Mammary epithelial cell (primary cell): ENCODE measurements at regions of chr22 and their contacts with region 1.

Region 1: GRCh38 chr22:40525249-40525884 is 111.2 kb downstream of the MRTFA start:
- DNase-seq: peak; percentile 20
- H3K4me3 ChIP-seq: no peak overlapping the region
- H3K27ac ChIP-seq: no peak overlapping the region
- H3K4me1 ChIP-seq: peaks cover 5% of the 10 kb centered on the region
- H3K27me3 ChIP-seq: no peaks in the 10 kb centered on the region
- CTCF ChIP-seq: peak; percentile 63 to 70

Region 2: DNA sequence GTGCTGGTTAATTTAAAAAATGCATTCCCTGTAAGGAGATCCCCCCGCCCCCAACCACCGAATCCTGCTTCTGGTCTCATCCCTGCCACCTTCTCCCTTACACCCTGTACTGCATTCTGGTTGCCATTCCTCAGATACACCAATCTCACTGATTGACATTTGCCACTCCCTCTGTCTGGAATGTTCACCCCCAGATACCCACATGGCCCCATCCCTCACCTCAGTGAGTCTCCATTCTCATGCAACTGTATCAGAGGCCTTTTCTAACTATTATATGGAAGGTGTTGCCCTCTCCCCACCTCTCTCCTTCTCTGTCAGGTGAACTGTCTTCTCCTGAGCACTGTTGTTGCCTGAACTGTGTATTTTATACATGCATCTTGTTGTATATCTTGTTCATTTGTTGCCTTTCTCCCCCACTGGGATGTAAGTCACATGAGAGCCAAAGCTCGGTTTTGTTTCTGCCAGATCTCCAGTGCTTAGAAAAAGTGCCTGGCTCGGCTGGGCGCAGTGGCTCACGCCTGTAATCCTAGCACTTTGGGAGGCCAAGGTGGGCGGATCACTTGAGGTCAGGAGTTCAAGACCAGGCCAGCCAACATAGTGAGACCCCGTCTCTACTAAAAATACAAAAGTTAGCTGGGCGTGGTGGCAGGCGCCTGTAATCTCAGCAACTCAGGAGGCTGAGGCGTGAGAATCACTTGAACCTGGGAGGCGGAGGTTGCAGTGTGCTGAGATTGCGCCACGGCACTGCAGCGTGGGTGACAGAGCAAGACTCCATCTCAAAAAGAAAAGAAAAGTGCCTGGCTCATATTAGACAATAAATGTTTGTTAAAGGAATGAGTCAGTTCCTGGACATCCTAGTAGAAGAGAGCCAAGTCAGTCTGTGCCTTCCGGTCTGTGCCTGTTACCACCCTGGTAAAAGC is 286.7 kb before region 1 on chr22:
- CTCF ChIA-PET with region 1: no interaction called
- dilution Hi-C with region 1: no loop called
- in situ Hi-C with region 1: no loop called
- intact Hi-C with region 1: no loop called
- DNase-seq: peak; percentile 87
- H3K4me3 ChIP-seq: peak overlapping the region in 1 of 3 experiments; percentile 22
- H3K27ac ChIP-seq: peak overlapping the region; percentile 70
- H3K4me1 ChIP-seq: peaks cover 63% of the 10 kb centered on the region
- H3K27me3 ChIP-seq: no peaks in the 10 kb centered on the region
- CTCF ChIP-seq: no peak

Region 3: DNA sequence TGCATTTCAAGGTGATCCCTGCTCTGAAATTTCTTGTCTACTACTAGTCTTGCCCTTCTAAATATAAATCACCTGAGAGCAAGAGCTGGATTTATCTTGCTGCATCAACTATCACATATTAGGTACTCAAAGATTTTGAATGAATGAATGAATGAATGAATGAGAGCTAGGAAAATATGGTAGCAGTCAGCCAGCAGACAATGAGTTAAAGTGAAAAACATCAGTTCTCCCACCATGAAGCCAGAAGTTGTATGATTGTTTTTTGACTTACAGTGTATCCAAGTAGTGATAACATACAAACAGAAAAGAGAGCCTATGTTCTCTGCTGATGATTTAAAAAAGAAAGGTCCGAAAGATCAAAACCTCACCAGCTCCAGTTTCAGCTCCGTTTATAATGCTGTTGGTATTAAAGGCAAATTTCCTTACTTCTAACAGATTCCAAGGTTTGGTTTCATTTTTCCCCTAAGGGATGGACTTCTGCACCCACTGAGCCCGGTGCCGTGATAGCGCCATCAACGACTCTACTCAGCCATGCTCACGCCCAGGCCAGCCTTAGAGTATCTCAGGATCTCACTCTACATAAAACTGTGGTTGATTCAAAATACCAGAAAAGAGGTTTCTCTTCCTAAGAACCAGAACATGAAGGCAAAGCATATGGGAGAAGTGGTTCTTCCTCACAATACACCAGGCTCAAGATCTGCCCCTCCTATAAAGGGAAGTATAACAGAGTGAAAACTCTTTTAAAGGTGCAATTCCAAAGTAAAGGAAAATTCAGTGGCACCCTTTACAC is 63.0 kb before region 1 on chr22:
- CTCF ChIA-PET with region 1: no interaction called
- dilution Hi-C with region 1: no loop called
- in situ Hi-C with region 1: no loop called
- intact Hi-C with region 1: no loop called
- DNase-seq: no peak
- H3K4me3 ChIP-seq: no peak overlapping the region
- H3K27ac ChIP-seq: no peak overlapping the region
- H3K4me1 ChIP-seq: no peaks in the 10 kb centered on the region
- H3K27me3 ChIP-seq: no peaks in the 10 kb centered on the region
- CTCF ChIP-seq: no peak

Region 4: DNA sequence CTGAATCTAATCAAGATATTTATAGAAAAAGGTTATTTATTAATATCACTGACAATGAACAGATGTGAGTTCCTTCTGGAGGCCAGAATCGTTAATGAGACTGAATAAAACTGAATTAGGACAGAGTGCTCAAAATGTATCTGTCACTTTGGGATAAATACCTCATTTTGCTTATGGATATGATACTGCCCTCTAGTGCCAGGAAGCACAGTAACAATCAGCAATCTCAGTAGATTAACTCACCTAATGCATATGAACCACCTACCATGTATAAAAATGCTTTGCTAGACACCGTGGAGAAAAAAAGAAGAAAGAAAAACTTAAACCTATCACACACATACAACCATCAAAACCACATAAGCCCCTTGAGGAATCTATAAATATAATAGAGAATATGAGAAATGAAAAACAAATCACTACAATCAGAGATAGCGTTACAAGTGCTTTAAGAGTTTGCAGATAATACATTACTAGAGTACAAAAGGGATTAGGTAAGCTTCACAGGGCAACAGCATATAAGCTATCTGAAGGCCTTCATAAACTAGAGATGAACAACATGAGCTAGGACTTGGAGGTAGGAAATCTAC is 37.6 kb before region 1 on chr22:
- CTCF ChIA-PET with region 1: no interaction called
- dilution Hi-C with region 1: no loop called
- in situ Hi-C with region 1: no loop called
- intact Hi-C with region 1: loop called (anchors 2 kb)
- DNase-seq: no peak
- H3K4me3 ChIP-seq: no peak overlapping the region
- H3K27ac ChIP-seq: peak overlapping the region; percentile 83
- H3K4me1 ChIP-seq: peaks cover 43% of the 10 kb centered on the region
- H3K27me3 ChIP-seq: no peaks in the 10 kb centered on the region
- CTCF ChIP-seq: peak; percentile 81 to 86

Region 5: GRCh38 chr22:40603088-40603605 is 77.8 kb after region 1 on chr22:
- CTCF ChIA-PET with region 1: no interaction called
- dilution Hi-C with region 1: no loop called
- in situ Hi-C with region 1: no loop called
- intact Hi-C with region 1: loop called (anchors 2 kb)
- DNase-seq: peak; percentile 66
- H3K4me3 ChIP-seq: peak overlapping the region in 2 of 3 experiments; percentile 21 to 37
- H3K27ac ChIP-seq: peak overlapping the region; percentile 92
- H3K4me1 ChIP-seq: peaks cover 52% of the 10 kb centered on the region
- H3K27me3 ChIP-seq: no peaks in the 10 kb centered on the region
- CTCF ChIP-seq: no peak

Region 6: DNA sequence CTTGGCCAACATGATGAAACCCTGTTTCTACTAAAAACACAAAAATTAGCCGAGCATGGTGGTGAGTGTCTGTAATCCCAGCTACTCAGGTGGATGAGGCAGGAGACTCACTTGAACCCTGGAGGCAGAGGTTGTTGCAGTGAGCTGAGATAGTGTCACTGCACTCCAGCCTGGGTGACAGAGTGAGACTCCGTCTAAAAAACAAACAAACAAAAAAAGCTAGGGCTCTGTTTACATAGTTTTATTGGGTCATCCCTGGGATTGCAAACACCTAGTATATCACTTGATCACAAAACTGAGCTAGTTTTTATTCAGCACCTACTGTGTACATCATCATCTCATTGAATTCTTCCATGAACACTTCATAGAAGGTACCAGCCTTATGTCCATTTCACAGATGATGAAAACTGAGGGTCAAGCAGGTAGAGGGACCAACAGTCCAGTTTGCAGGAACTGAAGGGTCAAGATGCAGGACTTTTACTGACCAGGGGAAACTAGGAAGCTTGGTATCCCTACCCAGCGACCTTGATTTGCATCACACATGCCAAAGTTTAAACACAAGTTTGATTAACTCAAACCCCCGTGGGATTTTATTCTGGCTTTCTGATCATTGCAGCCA is 120.3 kb after region 1 on chr22:
- CTCF ChIA-PET with region 1: interaction called, 9 read pairs
- dilution Hi-C with region 1: loop called (anchors 5 kb)
- in situ Hi-C with region 1: loop called in 1 of 2 experiments (anchors 5 kb)
- intact Hi-C with region 1: loop called (anchors 1 kb)
- DNase-seq: no peak
- H3K4me3 ChIP-seq: no peak overlapping the region
- H3K27ac ChIP-seq: no peak overlapping the region
- H3K4me1 ChIP-seq: peaks cover 18% of the 10 kb centered on the region
- H3K27me3 ChIP-seq: no peaks in the 10 kb centered on the region
- CTCF ChIP-seq: no peak

Region 7: DNA sequence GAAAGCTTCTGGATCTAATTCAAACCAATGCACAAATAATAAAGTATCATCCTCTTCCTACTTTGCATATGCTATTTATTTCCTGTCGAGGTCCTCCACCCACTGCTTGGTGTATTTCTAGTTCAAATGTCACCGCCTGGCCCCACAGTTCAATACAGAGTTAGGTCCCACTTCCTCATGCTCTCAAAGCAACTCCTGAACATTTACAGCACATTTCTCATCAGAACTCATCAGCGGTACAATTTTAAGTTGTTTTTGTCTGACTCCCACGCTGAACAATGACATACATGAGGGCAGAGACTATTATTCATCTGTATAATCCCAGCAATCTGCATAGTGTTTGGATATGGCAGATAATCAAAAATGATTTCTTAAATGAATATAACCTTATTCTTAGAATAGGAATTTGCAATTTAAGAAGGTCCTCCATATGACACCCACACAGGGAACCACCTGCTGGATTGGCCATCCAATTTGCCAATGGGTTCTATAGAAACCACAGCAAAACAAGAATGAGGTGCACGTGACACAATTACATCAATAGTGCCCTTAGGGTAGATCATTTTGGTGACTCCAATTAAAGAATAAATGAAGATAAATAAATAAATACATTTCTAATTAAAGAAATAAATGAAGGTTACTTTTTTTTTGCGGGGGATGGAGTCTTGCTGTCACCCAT is 239.5 kb after region 1 on chr22:
- CTCF ChIA-PET with region 1: no interaction called
- dilution Hi-C with region 1: no loop called
- in situ Hi-C with region 1: no loop called
- intact Hi-C with region 1: loop called (anchors 2 kb)
- DNase-seq: no peak
- H3K4me3 ChIP-seq: no peak overlapping the region
- H3K27ac ChIP-seq: no peak overlapping the region
- H3K4me1 ChIP-seq: no peaks in the 10 kb centered on the region
- H3K27me3 ChIP-seq: no peaks in the 10 kb centered on the region
- CTCF ChIP-seq: no peak